Heart left ventricle (tissue), 16 donors: ENCODE measurements at regions of chr10 and their contacts with region 1.

Region 1: DNA sequence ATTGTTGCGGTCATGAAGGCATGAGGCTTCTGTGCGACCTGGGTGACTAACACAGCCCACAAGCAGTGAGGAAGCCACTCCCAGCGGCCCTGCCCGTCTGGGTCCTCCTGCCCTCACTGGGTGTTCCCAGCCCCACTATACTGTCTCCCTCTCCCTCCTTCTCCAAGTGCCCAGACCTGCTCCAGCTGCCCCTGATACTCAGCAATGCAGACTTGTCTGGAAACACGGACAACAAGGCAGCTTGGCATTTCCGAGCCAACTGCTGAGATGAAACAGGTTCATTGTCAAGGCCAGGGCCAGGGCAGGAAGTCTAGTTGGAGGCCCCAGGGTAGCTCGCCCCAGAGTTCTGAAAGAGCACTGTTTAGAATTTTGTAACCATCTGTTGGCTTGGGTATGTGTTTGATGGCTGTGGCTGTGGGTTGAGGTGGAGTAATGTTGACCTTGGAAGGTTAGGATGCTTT is 95.7 kb downstream of the RBM20 start:
- DNase-seq: peak in 1 of 5 donors; percentile 55
- ATAC-seq: peak; percentile 23 to 75 (median 58)
- H3K4me3 ChIP-seq: no peak overlapping the region
- H3K27ac ChIP-seq: peak overlapping the region in 11 of 12 donors; percentile 57 to 90 (median 73)
- H3K4me1 ChIP-seq: peaks cover 2 to 92% (median 19%) of the 10 kb centered on the region in 12 donors
- H3K27me3 ChIP-seq: peaks cover 0 to 2% (median 0%) of the 10 kb centered on the region in 9 donors
- CTCF ChIP-seq: no peak
- POLR2A ChIP-seq: no peak

Region 2: GRCh38 chr10:110698782-110699201 is 41.0 kb before region 1 on chr10:
- intact Hi-C with region 1: no loop called
- DNase-seq: peak in 4 of 5 donors; percentile 56 to 83 (median 76)
- ATAC-seq: peak; percentile 61 to 91 (median 80)
- H3K4me3 ChIP-seq: no peak overlapping the region
- H3K27ac ChIP-seq: peak overlapping the region; percentile 67 to 94 (median 81)
- H3K4me1 ChIP-seq: peaks cover 0 to 82% (median 25%) of the 10 kb centered on the region in 12 donors
- H3K27me3 ChIP-seq: no peaks in the 10 kb centered on the region
- CTCF ChIP-seq: no peak
- POLR2A ChIP-seq: no peak

Region 3: GRCh38 chr10:110729320-110729871 is 10.4 kb before region 1 on chr10:
- intact Hi-C with region 1: loop called in 1 of 10 experiments (anchors 2 kb)
- DNase-seq: no peak
- ATAC-seq: no peak
- H3K4me3 ChIP-seq: no peak overlapping the region
- H3K27ac ChIP-seq: peak overlapping the region in 5 of 12 donors; percentile 14 to 74 (median 56)
- H3K4me1 ChIP-seq: peaks cover 0 to 74% (median 29%) of the 10 kb centered on the region in 12 donors
- H3K27me3 ChIP-seq: no peaks in the 10 kb centered on the region
- CTCF ChIP-seq: no peak
- POLR2A ChIP-seq: no peak